Gastrocnemius medialis (tissue), 4 donors: ENCODE measurements at regions of chr1 and their contacts with region 1.

Region 1: DNA sequence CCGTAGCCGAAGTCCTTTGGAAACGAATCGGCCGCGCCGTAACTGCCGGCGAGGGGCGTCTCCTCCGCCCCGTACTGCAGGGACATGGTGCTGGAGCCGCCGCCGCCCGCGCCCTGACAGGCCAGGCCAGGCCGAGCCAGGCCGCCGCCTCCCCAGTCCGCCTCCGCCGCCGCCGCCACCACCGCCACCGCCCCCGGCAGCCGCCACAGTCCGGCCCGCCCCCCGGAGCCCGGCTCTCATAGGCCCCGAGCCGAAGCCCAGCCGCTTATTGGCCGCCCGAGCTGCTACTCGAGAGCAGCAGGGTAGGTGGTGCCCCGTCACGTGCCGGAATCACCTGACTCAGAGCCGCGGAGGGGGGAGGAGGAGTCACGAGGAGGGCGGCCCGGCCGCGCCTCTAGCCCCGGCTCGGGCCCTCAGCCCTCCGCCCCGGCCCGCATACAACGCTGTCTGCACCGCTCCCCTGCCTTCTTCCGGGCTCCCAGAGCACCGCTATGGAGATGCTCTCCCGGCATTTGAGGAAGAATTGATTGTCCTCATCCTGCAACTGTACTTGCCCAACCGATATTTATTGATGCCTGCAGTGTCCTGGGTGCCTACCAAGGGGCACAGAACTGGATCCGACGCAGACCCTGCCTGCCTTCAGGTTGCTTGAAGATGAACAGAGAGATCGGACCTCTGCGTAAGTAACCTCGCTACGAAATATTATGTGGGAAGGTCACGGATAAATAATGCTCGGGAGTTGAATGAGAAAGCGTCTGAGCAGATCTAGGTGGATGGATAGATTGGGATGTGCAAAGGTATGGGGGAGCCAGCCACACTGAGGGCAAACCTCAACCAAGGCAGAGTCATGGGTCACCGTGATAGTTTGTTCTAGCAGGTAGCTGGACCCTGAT is at the start of gene RRAGC:
- DNase-seq: peak; percentile 100
- ATAC-seq: peak; percentile 90
- H3K4me3 ChIP-seq: peak within 1 kb of the TSS; percentile 75 to 95 (median 86)
- H3K27ac ChIP-seq: peak within 1 kb of the TSS; percentile 93 to 96 (median 94)
- H3K4me1 ChIP-seq: peaks cover 45 to 65% of the 10 kb centered on the region in 2 donors
- H3K27me3 ChIP-seq: no peaks in the 10 kb centered on the region
- CTCF ChIP-seq: peak in 1 of 5 experiments; percentile 24
- POLR2A ChIP-seq: peak; percentile 91 to 94
- total RNA-seq, gene RRAGC: 8.0 to 15.5 (median 11.2) TPM

Region 2: DNA sequence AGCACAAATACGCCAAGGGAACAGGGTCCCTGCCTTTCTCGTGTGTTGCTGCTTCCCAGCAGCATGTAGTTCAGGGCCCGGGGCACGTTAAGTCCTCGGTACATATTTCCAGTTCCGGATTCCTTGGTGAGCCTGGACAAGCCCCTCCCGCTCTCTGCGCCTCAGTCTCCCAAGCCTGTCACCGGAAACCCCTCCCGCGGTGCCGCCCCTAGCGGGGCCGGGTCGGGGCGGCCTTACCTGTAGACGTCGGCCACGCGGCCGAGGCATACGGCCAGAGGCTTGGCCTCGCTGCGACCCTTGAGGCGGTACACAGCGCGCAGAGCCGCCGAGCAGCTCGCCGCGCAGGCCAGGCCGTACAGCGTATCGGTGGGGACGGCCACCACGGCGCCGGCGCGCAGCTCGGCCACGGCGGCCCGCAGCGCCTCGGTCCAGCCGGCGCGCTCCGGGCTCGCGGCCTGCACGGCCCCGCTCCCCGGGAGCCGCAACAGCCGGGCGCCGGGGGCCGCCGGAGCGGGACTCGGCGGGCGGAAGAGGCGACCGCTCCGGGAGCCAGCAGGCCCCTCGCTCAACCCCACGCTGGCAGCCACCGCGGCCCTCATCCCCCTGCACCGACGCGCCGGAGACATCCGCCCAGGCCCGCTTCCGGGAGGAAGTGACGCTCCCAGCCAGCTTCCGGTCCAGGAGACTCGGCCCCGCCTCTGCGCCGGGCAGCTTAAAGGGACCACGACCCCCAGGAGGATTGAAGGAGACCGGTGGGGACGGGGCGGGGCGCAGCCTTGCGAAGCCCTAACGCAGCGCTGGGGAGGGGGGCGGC is 1052.0 kb before region 1 on chr1 and contains the starts of genes C1orf122 and YRDC:
- in situ Hi-C with region 1: no loop called
- intact Hi-C with region 1: loop called (anchors 2 kb)
- DNase-seq: peak; percentile 90 to 92
- ATAC-seq: peak; percentile 85 to 94
- H3K4me3 ChIP-seq: peak within 1 kb of the TSS; percentile 74 to 93 (median 87)
- H3K27ac ChIP-seq: peak within 1 kb of the TSS; percentile 89 to 98 (median 96)
- H3K4me1 ChIP-seq: peaks cover 29 to 34% of the 10 kb centered on the region in 2 donors
- H3K27me3 ChIP-seq: no peaks in the 10 kb centered on the region
- CTCF ChIP-seq: no peak
- POLR2A ChIP-seq: peak; percentile 89 to 93
- total RNA-seq, gene C1orf122: 41.2 to 96.0 (median 56.8) TPM
- total RNA-seq, gene YRDC: 11.2 to 13.6 (median 11.7) TPM

Region 3: DNA sequence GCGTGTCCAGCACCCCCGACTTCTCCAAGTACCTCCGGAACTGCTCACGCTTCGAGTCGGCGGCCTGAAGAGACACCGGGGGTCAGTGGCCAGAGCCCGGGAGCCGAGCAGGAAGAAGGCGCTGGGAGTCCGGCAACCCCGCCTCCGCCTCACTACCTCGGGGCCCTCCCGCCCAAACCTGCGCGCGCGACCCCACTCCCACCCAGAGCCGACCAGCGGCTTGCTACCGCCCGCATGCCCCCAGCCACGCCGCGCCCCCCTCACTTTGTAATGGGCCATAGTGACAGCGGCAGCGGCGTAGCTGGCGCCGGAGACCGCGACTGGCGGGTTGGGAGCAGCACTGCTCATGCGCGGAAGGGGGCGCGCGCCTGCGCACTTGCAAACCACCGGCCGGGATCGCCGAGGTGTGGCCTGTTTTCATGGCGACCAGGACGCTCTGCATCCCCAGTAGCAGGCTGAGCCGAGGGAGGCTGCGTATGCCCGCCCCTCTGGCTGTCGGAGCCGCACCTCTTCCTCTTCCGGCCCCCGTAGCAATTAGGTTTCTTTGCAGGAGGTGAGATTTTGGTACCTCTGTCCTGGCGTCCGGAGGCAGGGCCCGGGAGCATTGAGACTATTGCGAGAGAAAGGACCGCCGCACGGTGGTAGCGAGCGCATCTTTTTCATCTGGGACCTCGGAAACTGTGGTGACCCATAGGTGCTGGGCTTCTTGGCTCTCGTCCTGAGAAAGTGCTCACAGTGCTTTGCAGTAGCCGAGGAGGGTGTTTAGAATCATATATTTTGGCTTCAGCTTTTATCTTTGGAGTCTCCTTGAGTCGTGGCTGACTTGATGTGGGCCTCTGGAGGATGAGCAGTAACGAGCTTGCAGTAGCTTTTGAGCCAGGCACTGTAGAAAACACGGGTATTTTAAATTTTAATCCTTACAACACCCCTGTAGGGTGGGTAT is 13.5 kb after region 1 on chr1 and contains the start of gene MYCBP:
- in situ Hi-C with region 1: no loop called
- intact Hi-C with region 1: loop called (anchors 1 kb)
- DNase-seq: peak; percentile 94 to 95
- ATAC-seq: peak; percentile 98
- H3K4me3 ChIP-seq: peak within 1 kb of the TSS; percentile 69 to 95 (median 73)
- H3K27ac ChIP-seq: peak within 1 kb of the TSS; percentile 69 to 86 (median 77)
- H3K4me1 ChIP-seq: peaks cover 24 to 25% of the 10 kb centered on the region in 2 donors
- H3K27me3 ChIP-seq: no peaks in the 10 kb centered on the region
- CTCF ChIP-seq: peak in 2 of 5 experiments; percentile 22 to 24
- POLR2A ChIP-seq: peak; percentile 25 to 37
- total RNA-seq, gene MYCBP: 9.8 to 22.3 (median 13.5) TPM

Region 4: DNA sequence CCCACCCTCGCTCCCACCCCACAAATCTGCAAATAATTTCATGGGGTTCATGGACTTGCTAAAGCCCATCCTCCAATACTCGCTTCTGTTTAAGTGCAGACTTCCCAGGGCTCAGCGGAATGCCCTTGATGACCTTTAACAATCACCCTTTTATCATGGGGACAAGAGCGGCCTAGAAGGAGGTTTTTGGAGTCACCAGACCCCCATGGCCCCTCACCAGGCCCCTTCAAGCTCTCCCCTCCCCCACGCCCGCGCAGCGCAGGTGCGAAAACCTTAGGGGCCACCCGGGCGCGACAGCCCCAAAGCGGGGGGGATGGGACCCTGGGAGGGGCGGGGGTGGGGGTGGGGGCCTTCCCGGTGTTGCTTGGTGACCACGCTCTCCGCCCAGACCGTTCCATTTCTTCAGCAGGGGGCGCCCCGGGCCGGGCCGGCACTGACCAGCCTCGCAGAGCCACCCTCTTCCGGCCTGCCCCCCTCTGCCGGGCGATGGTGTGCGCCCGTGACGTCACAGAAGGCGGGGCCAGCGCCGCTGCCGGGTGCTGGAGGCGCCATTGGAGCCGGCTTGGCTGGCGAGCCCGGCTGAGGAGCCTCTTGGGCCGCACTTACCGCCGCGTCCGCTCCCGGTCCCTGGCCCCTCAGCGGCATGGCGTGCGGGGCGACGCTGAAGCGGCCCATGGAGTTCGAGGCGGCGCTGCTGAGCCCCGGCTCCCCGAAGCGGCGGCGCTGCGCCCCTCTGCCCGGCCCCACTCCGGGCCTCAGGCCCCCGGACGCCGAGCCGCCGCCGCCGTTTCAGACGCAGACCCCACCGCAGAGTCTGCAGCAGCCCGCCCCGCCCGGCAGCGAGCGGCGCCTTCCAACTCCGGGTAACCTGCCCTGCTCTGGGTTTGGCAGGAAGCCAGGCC is 131.2 kb after region 1 on chr1 and contains the start of gene AKIRIN1:
- in situ Hi-C with region 1: loop called in 1 of 4 experiments (anchors 10 kb)
- intact Hi-C with region 1: loop called (anchors 1 kb)
- DNase-seq: peak; percentile 96 to 98
- ATAC-seq: peak; percentile 95 to 96
- H3K4me3 ChIP-seq: peak within 1 kb of the TSS; percentile 74 to 98 (median 91)
- H3K27ac ChIP-seq: peak within 1 kb of the TSS; percentile 91 to 98 (median 92)
- H3K4me1 ChIP-seq: peaks cover 18 to 21% of the 10 kb centered on the region in 2 donors
- H3K27me3 ChIP-seq: no peaks in the 10 kb centered on the region
- CTCF ChIP-seq: peak in 1 of 5 experiments; percentile 22
- POLR2A ChIP-seq: peak; percentile 95 to 96
- total RNA-seq, gene AKIRIN1: 28.2 to 46.0 (median 34.2) TPM

Region 5: DNA sequence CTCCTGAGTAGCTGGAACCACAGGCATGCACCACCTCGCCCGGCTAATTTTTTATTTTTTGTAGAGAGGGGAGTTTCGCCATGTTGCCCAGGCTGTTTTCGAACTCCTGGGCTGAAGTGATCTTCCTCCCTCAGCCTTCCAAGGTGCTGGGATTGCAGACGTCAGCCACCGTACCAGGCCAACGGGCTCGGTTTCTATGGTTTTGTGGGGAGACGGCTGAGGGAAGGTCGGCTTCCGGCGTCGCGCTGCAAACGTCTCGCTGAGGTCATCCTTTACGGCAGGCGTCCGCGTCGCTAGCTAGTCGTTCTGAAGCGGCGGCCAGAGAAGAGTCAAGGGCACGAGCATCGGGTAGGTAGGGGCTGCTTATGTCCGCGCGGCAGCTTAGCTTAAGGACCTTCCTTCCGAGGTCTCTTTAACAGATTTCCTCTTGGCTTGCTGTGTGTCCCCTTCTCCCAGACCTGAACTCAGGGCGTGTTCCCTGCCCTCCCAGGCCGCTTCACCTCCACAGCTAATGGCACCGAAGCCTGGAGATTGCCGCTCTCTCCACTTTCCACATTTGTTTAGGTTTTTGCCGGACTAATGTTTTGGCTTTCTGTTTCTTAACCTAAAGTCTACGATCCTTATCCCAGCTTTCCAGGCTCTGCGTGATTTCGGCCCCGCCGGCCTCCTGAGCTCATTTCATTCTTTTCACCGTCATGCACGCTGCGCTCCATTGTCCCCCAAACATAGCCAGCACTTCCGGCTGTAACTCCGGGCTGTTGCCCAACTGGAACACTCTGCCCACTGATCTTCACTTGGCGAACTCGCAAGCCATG is 166.5 kb after region 1 on chr1 and contains the start of gene NDUFS5:
- in situ Hi-C with region 1: loop called in 1 of 4 experiments (anchors 25 kb)
- intact Hi-C with region 1: loop called (anchors 1 kb)
- DNase-seq: peak; percentile 82 to 90
- ATAC-seq: peak; percentile 95 to 96
- H3K4me3 ChIP-seq: peak within 1 kb of the TSS; percentile 68 to 91 (median 80)
- H3K27ac ChIP-seq: peak within 1 kb of the TSS; percentile 91 to 97 (median 94)
- H3K4me1 ChIP-seq: peaks cover 14 to 19% of the 10 kb centered on the region in 2 donors
- H3K27me3 ChIP-seq: no peaks in the 10 kb centered on the region
- CTCF ChIP-seq: peak in 1 of 5 experiments; percentile 15
- POLR2A ChIP-seq: peak; percentile 86 to 95
- total RNA-seq, gene NDUFS5: 603 to 976 (median 911) TPM

Region 6: GRCh38 chr1:39183503-39184353 is 323.9 kb after region 1 on chr1:
- in situ Hi-C with region 1: no loop called
- intact Hi-C with region 1: loop called (anchors 10 kb)
- DNase-seq: peak; percentile 65 to 82
- ATAC-seq: peak; percentile 95 to 96
- H3K4me3 ChIP-seq: no peak overlapping the region
- H3K27ac ChIP-seq: peak overlapping the region; percentile 80 to 91 (median 83)
- H3K4me1 ChIP-seq: peaks cover 33 to 35% of the 10 kb centered on the region in 2 donors
- H3K27me3 ChIP-seq: no peaks in the 10 kb centered on the region
- CTCF ChIP-seq: peak; percentile 36 to 63 (median 58)
- POLR2A ChIP-seq: peak in 1 of 2 donors; percentile 40